ENCODE measurements at regions of chr10 and their contacts with region 1.

Region 1: GRCh38 chr10:85666102-85666501 is 700.5 kb downstream of the GRID1 start:
- DNase-seq: no peak

Region 2: DNA sequence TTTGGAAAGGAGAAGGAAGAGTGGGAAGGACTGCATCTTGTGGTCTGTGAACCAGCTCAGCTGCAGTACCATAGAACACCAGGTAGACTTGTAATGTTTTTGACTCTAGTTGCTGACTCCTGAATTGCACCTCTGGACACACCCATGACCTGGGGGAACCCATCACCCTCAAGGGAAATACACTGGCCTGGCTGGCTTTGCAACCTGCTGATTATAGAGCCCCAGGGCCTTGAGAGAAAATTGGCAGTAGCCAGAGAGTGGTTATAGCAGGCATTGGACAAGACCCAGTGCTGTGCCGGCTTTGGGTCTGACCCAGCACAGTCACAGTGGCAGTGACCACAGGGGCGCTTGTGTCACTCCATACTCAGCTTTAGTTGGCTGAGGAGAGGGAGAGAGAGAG is 201.8 kb before region 1 on chr10:
- intact Hi-C with region 1: no loop called
- DNase-seq: no peak

Region 3: GRCh38 chr10:85761906-85762445 is 95.9 kb after region 1 on chr10:
- intact Hi-C with region 1: loop called in 1 of 2 experiments (anchors 5 kb)
- DNase-seq: no peak

Region 4: DNA sequence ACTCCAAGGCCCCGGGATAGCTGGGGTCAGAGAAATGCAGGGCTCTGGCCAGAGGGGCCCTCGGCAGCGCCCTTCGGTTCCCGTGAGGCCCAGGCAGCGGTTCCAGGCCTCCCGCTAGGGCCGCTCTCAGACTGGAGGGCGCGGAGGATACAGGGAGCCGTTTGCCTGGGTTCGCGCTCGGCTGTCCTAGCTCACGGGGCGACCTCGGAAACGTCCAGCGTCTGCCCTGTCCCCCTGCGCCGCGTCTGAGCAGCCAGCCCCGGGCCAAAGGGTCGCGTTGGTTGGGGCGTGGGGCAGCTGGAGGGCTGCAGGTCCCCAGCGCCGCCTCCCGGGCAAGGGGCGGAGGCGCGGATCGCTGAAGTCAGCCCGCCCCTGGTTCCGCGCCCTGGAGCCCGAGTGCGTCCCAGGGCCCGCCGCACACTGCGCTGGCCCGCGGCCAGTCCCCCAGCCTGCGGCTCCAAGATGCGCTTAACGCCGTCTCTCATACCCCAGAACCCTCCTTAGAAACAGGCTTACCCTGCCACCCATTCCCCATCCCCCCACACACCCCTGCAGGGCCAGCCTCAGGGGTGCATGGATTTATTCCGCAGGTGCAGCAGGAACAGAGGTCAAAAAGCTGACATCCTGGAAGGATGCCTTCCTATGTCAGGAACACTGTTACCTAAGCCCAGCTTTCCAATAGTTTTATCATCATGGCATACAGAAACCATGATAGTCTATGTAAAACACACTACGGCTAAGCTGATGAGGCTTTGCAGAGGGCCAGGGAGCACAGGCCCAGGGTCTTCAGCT is 966.1 kb after region 1 on chr10:
- intact Hi-C with region 1: no loop called
- DNase-seq: no peak

Measured in posterior vena cava (tissue), 2 donors.